ENCODE measurements at regions of chr5 and their contacts with region 1.

Region 1: GRCh38 chr5:3394891-3395599 is 200.6 kb upstream of the IRX1 start:
- DNase-seq: no peak

Region 2: DNA sequence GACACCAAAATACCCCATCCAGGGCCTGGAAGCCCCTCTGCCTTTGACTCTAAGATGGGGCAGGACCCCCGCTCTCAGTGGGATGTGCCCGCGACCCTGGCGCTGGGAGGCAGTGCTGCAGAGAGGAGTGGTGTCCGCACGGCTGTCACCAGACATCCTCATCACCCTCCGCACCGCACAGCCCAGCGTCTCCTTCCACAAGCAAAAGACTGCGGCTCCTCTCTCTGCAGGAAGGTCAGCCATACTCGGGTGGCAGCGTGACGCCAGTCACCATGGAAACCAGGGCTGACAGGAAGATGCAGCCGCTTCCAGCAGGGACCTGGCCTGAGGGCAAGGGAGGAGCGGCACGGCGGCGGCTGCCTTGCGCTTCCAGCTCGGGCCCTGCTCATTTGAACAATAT is 1932.7 kb before region 1 on chr5:
- intact Hi-C with region 1: loop called in 1 of 2 experiments (anchors 5 kb)
- DNase-seq: peak; percentile 68

Measured in posterior vena cava (tissue), 2 donors.